ENCODE measurements at regions of chr13 and their contacts with region 1.

Region 1: GRCh38 chr13:64697226-64697625 is 2532.9 kb downstream of the PCDH9 start:
- DNase-seq: no peak
- ATAC-seq: no peak
- H3K4me3 ChIP-seq: no peak overlapping the region
- H3K27ac ChIP-seq: no peak overlapping the region
- H3K4me1 ChIP-seq: no peaks in the 10 kb centered on the region
- H3K27me3 ChIP-seq: no peaks in the 10 kb centered on the region
- CTCF ChIP-seq: no peak

Region 2: DNA sequence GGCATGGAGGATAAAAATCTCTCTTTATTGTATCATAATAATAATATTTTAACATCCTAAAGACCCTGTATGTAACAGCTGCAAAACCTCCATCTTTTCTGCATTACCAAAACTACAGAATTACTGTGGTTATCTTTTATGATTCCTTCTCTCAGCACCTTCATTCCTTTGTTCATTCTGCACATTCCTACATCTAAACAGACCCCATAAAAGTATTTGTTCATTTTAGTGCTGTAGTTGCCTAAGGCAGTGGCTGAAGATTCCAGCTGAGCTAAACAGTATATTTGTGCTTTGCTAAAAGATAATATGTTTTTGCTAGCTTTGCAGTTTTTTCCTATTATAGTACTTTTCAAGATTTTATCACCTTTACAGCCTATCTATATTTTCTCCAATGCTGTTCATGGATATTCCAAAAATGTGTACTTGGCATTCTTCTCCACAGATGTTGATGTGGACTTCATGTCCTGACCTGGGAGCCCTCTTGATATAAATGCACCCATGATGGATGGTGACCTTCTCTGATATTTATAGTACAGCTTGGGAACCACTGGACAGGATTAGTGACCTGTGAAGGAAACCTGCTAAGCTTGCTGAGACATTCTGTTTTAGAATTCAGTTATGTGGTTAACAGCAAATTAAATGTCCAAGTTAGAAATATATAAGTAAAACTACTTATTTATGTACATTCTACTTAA is 448.7 kb before region 1 on chr13:
- CTCF ChIA-PET with region 1: no interaction called
- POLR2A ChIA-PET with region 1: no interaction called
- in situ Hi-C with region 1: no loop called
- intact Hi-C with region 1: no loop called
- DNase-seq: no peak
- ATAC-seq: peak; percentile 63; the same call in 1 of the 2 replicates
- H3K4me3 ChIP-seq: no peak overlapping the region
- H3K27ac ChIP-seq: peak overlapping the region; percentile 61; the same call in 1 of the 2 replicates
- H3K4me1 ChIP-seq: no peaks in the 10 kb centered on the region
- H3K27me3 ChIP-seq: no peaks in the 10 kb centered on the region
- CTCF ChIP-seq: no peak

Region 3: DNA sequence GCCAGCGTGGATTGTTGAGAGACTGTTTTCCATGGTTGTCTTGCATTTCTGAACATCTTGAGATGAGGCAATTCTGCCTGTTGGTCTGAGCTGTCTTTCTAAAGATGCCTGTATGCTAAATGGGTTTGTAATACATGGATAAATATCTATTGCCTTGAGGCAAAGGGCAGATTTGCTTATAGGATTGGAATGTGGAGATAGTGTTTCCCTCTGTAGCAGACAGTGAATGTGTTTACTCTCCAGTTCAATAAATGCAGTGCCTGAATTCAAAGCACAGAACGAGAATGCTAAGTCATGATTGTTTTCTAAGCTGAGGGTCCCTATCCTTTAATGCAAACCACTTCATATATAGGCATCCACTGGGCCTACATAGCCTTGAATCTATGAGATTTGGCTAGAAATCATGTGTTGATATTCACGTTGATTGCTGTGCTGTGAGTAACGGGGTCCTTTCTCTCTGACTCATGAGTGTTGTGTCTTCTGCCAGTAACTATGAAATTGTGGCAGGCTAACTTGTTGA is 21.9 kb before region 1 on chr13:
- CTCF ChIA-PET with region 1: no interaction called
- POLR2A ChIA-PET with region 1: no interaction called
- in situ Hi-C with region 1: no loop called
- intact Hi-C with region 1: no loop called
- DNase-seq: peak; percentile 13
- ATAC-seq: peak; percentile 82
- H3K4me3 ChIP-seq: no peak overlapping the region
- H3K27ac ChIP-seq: peak overlapping the region; percentile 59
- H3K4me1 ChIP-seq: 0 out of 2 replicates have a peak, but pooled peaks cover 3% of the 10 kb centered on the region
- H3K27me3 ChIP-seq: no peaks in the 10 kb centered on the region
- CTCF ChIP-seq: no peak

Region 4: GRCh38 chr13:64740493-64740892 is 43.3 kb after region 1 on chr13:
- CTCF ChIA-PET with region 1: no interaction called
- POLR2A ChIA-PET with region 1: no interaction called
- in situ Hi-C with region 1: no loop called
- intact Hi-C with region 1: loop called (anchors 2 kb)
- DNase-seq: no peak
- ATAC-seq: no peak
- H3K4me3 ChIP-seq: no peak overlapping the region
- H3K27ac ChIP-seq: no peak overlapping the region
- H3K4me1 ChIP-seq: no peaks in the 10 kb centered on the region
- H3K27me3 ChIP-seq: no peaks in the 10 kb centered on the region
- CTCF ChIP-seq: no peak

Measured in Panc1 (cell line).